ENCODE measurements at regions of chr4 and their contacts with region 1.

Region 1: DNA sequence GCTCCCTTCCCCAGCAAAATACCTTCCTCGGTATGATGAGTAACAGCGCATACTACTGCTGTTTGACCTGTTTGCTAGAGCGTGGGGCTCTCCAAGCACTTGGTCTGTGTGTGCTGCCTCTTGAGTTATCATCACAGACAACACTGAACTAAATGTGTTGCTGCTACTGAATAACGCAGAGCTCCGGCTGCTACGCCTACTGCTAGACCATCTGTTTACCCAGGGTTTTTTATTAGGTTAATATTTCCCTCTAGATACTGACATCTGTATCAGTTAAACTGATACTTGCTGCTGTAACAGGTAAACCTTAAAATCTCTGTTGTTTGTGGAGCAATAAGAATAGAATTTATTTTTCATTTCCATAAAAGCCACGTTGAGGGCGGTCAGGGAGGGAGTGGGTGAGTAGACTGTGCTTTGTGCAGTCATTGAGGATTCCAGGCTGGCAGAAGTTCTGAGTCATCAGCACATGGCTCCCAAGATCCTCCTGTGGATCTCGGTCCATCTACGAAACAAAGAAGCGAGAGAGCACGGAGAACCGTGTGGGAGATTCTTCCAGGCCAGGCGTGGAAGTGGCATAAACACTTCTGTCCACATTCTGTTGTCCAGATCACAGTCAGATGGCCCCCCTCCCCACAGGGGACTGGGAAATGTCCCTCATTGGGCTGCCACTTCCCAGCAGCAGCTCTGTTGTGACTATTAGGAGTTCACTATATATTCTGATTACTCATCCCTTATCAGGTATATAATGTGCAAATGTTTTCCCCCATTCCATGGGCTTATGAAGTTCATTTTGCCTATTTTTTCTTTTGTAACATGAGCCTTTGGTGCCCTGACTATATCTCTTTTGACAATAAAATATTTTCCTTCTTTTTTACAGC is 14.1 kb downstream of the GRK4 start:
- DNase-seq: no peak
- ATAC-seq: no peak
- H3K4me3 ChIP-seq: no peak overlapping the region
- H3K4me3 Mint-ChIP-seq: no peak overlapping the region
- H3K27ac ChIP-seq: no peak overlapping the region
- H3K27ac Mint-ChIP-seq: no peak overlapping the region
- H3K4me1 ChIP-seq: peaks cover 2% of the 10 kb centered on the region
- H3K4me1 Mint-ChIP-seq: no peaks in the 10 kb centered on the region
- H3K27me3 ChIP-seq: peaks cover 0 to 8% of the 10 kb centered on the region in 2 experiments
- H3K27me3 Mint-ChIP-seq: no peaks in the 10 kb centered on the region
- CTCF ChIP-seq: no peak

Region 2: GRCh38 chr4:2832349-2833239 is 144.9 kb before region 1 on chr4:
- CTCF ChIA-PET with region 1: no interaction called
- POLR2A ChIA-PET with region 1: no interaction called
- intact Hi-C with region 1: no loop called
- DNase-seq: peak in 2 of 14 experiments; percentile 12 to 31
- ATAC-seq: no peak
- H3K4me3 ChIP-seq: no peak overlapping the region
- H3K4me3 Mint-ChIP-seq: no peak overlapping the region
- H3K27ac ChIP-seq: no peak overlapping the region
- H3K27ac Mint-ChIP-seq: peak overlapping the region; percentile 17
- H3K4me1 ChIP-seq: peaks cover 40% of the 10 kb centered on the region
- H3K4me1 Mint-ChIP-seq: peaks cover 22% of the 10 kb centered on the region
- H3K27me3 ChIP-seq: no peaks in the 10 kb centered on the region
- H3K27me3 Mint-ChIP-seq: no peaks in the 10 kb centered on the region
- CTCF ChIP-seq: no peak

Region 3: DNA sequence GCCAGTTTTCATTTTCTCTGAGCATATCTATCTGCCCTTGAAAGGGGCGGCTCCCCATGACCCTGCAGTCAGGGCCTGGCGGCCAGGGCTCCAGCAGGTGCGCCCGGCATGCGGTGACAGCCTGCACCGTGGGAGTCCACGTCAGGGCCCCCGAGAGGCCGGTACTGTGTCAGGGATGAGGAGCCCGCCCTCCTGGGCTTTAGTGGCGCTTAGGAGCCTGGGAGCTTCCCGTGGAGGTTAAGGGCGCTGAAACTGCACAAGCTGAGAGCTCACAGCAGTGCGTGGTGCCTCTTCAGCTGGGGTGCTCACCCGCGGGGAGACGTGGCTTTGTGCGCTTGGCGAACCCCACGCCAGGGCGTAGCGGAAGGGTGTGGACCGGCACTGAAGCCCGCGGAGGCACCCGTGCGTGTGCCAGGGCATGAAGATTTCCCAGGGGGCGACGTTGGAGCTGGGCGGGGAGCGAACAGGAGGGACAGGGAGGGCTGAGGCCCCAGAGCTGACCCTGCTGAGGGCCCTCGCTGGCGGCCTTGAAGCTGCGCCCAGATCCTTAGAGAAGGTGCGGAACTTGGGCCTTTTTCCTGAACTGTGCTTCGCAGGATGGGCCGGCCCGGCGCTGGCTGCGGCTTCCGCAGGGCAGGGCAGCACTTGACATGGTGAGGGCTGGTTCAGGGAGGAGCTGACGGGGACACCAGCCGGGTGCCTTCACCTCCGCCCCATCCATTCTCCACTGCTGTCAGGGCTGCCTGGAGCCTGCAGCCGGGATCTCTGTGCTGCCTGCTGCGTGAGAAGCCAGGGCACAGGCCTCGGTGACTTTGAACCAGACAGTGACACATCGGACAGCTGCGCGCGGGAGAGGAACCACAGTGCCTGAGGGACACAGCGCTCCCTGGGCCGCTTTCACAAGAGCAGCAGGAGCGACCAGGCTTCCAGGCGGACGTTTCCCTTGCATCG is 64.0 kb after region 1 on chr4:
- CTCF ChIA-PET with region 1: no interaction called
- POLR2A ChIA-PET with region 1: interaction called, 3 read pairs
- intact Hi-C with region 1: loop called (anchors 1 to 5 kb)
- DNase-seq: peak in 11 of 14 experiments; percentile 13 to 79 (median 27)
- ATAC-seq: peak; percentile 37
- H3K4me3 ChIP-seq: peak overlapping the region; percentile 58
- H3K4me3 Mint-ChIP-seq: peak overlapping the region; percentile 90
- H3K27ac ChIP-seq: peak overlapping the region in 1 of 2 donors; percentile 51
- H3K27ac Mint-ChIP-seq: peak overlapping the region; percentile 82
- H3K4me1 ChIP-seq: peaks cover 71% of the 10 kb centered on the region
- H3K4me1 Mint-ChIP-seq: peaks cover 54% of the 10 kb centered on the region
- H3K27me3 ChIP-seq: no peaks in the 10 kb centered on the region
- H3K27me3 Mint-ChIP-seq: peaks cover 12% of the 10 kb centered on the region
- CTCF ChIP-seq: no peak

Measured in CD4-positive, alpha-beta T cell (primary cell).